ENCODE measurements at regions of chr11 and their contacts with region 1.

Region 1: DNA sequence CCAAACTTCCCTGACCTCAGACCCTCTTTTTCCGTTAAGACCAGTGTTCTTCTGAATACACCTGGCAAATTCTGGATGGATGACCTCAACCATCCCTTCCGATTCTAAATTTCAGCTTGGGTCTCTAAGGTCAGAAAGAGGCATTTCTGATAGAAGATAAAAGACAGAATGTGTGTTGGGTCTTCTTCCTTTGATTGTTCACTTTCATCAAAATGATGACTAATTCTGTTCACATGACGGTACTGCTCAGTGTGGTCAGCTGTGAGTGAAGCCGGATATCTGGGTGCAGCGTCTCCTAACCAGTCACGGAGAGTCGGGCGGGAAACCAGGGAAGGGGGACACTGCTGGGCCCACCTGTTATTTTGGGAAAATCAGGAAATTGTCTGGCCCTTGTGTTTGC is 151.6 kb upstream of the NAV2 start:
- DNase-seq: no peak
- H3K4me3 Mint-ChIP-seq: no peak overlapping the region
- H3K27ac Mint-ChIP-seq: no peak overlapping the region
- H3K4me1 Mint-ChIP-seq: no peaks in the 10 kb centered on the region
- H3K27me3 Mint-ChIP-seq: peaks cover 17% of the 10 kb centered on the region

Region 2: DNA sequence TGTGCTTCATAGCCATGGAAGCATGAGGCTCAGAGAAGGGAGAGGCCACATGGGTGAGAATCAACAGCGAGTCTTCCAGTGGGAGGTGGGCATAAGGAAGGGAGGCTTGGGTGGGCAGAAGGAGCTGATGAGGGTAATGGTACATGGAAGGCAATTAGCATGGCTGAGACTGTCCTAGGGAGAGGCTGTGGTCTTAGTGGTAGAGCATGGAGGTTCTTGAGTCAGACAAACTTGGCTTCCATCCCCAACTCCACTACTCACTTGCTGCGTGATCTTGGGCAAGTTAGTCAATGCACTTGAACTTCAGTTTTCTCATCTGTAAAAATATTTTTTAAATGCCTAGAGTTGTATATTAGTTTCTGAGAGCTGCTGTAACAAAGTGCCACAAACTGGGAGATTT is 93.1 kb before region 1 on chr11:
- CTCF ChIA-PET with region 1: no interaction called
- intact Hi-C with region 1: no loop called
- DNase-seq: no peak
- H3K4me3 Mint-ChIP-seq: no peak overlapping the region
- H3K27ac Mint-ChIP-seq: no peak overlapping the region
- H3K4me1 Mint-ChIP-seq: no peaks in the 10 kb centered on the region
- H3K27me3 Mint-ChIP-seq: peaks cover 10% of the 10 kb centered on the region

Region 3: DNA sequence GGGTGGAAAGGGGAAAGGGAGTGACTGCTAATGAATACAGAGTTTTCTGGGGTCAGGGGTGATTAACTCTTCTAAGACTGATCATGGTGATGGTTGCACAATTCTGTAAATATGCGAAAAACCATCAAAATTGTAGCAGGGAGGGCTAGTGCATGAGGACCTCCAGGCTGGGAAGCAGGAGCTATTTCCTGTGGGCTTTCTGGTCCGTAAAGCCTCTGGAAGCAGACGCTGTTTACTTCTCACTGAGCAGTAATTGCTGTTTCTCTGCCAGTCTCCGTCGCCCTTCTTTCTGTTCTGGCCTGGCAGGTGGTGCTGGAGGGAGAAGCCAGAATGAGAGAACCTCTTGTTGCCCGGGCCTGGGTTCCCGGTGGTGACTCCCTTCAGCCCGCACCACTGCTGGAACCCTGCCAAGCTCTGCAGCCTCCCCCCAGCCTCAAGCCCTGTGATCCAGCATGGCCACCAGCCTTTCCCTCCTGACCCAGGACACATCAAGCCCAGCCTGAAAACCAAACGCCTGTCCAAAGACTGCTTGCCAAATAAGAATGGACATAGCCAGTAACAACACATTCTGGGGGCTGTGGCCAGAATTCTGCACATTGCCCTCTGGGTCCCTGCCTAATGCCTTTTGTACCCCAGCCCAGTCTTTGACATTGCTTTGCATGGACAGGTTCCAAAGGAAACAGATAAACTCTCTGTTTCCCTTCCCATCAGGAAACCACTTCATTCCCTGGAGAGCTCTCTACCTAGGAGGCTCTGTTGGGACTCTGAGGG is 49.4 kb before region 1 on chr11:
- CTCF ChIA-PET with region 1: no interaction called
- intact Hi-C with region 1: no loop called
- DNase-seq: no peak
- H3K4me3 Mint-ChIP-seq: no peak overlapping the region
- H3K27ac Mint-ChIP-seq: no peak overlapping the region
- H3K4me1 Mint-ChIP-seq: no peaks in the 10 kb centered on the region
- H3K27me3 Mint-ChIP-seq: peaks cover 17% of the 10 kb centered on the region

Region 4: DNA sequence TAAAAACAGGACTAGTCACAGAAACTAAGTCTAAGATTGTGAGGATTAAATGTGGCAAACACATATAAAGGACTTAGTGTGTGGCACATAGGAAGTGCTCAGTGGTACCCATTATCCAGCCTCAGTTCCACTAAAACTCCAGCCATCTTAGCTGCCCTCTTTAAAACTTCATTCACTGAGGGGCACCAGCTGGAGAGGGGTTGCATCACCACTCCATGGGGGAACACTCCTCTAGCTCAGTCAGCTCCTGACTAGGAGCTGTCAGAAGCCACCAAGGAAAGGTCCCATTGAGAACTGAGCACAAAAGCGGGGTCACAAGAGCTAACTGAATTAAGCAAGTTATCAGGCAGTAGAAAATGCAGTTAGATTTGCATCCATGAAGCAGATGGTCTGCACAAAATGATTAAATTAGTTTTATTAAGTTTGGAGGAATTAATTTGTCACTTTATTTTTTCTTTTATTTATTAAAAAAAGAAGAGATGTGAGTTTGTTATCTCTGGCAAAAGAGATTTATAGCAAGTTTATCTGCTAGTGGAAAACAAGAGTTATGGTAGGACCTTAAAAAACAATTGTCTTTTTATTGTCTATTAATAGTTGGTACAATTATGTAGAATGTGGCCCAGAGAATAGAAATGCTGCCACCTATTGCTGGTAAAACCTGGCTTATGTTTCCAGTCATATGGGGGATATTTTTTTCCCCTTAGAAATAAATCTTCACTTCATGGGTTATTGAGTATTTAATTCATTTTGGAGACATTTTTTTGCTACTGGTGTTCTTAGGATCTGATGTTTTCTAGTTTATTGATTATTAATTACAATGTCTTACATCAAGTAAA is 247.3 kb after region 1 on chr11:
- CTCF ChIA-PET with region 1: no interaction called
- intact Hi-C with region 1: loop called (anchors 1 kb)
- DNase-seq: no peak
- H3K4me3 Mint-ChIP-seq: no peak overlapping the region
- H3K27ac Mint-ChIP-seq: no peak overlapping the region
- H3K4me1 Mint-ChIP-seq: no peaks in the 10 kb centered on the region
- H3K27me3 Mint-ChIP-seq: peaks cover 2% of the 10 kb centered on the region

Region 5: DNA sequence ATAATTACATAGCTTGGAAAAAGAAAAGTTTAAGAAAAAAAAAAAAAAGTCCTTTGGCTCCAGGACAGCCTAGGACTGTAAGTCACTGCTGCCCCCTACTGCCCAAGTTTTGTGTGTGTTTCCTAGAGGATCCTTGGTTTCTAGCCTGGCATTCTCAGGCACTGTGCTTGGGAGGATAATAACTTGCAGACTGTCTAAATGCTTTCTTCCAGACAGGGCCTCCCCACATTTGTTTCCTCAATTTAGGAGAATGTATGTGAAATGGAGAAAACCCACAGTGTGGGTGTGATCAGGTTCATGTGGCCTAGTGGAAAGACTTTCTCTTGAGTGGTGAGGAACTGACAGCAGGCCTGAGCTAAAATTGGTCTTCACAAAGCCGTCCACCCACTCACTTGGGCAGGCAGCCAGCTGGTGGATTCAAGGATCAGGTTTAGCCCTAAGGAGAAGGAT is 342.6 kb after region 1 on chr11:
- CTCF ChIA-PET with region 1: interaction called, 33 read pairs
- intact Hi-C with region 1: loop called (anchors 1 kb)
- DNase-seq: peak; percentile 76
- H3K4me3 Mint-ChIP-seq: no peak overlapping the region
- H3K27ac Mint-ChIP-seq: no peak overlapping the region
- H3K4me1 Mint-ChIP-seq: no peaks in the 10 kb centered on the region
- H3K27me3 Mint-ChIP-seq: no peaks in the 10 kb centered on the region

Measured in activated naive CD4-positive, alpha-beta T cell treated with anti-CD3 and anti-CD28 coated beads for 36 hours (primary cell).